Panc1 (cell line): ENCODE measurements at regions of chr1 and their contacts with region 1.

Region 1: DNA sequence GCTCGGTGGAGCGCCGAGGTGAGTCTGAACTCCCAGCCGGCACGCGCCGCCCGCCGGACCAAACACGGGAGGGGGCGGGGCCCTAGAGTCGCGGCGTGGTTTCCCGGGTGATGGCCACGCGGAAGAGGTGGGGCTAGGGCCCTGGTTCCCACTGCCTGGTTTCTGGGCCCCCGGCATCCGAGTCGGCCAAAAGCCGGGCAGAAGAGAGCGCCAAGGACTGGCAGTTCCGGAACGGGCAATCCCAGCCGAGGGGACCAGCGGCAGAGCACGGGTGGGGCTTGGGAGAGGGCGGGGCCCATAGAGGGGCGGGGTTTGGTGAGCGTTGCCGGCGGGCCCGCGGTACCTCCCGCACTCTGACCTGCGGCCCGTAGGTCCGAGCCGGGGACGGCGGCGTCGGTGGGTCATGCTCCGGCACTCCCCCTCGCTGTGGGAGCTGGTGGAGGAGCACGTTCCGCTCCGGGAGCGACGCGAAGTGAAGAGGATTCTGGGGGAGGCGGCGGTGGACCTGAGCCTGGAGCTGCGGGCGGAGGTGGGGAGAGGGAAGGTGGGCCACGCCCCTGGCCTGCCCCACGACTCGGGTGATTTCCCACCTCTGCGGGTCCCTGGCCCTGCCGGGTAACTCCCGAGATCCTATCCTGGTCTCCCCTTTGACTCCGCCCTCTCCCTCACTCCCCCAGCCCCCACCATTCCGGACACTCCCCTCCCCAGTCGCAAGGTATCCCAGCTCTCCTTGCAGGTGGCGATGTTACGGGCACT is at the start of gene CCDC24:
- DNase-seq: no peak
- ATAC-seq: peak; percentile 85
- H3K4me3 ChIP-seq: peak within 1 kb of the TSS; percentile 60 to 82
- H3K27ac ChIP-seq: peak within 1 kb of the TSS; percentile 92
- H3K4me1 ChIP-seq: peaks cover 16% of the 10 kb centered on the region
- H3K27me3 ChIP-seq: no peaks in the 10 kb centered on the region
- CTCF ChIP-seq: no peak
- total RNA-seq, gene CCDC24: 24.4 TPM

Region 2: GRCh38 chr1:44016890-44017400 is 25.3 kb after region 1 on chr1:
- CTCF ChIA-PET with region 1: interaction called, 15 read pairs
- POLR2A ChIA-PET with region 1: interaction called, 5 read pairs
- in situ Hi-C with region 1: no loop called
- intact Hi-C with region 1: no loop called
- DNase-seq: no peak
- ATAC-seq: no peak
- H3K4me3 ChIP-seq: no peak overlapping the region
- H3K27ac ChIP-seq: no peak overlapping the region
- H3K4me1 ChIP-seq: no peaks in the 10 kb centered on the region
- H3K27me3 ChIP-seq: no peaks in the 10 kb centered on the region
- CTCF ChIP-seq: no peak

Region 3: GRCh38 chr1:44036409-44037139 is 44.9 kb after region 1 on chr1:
- CTCF ChIA-PET with region 1: no interaction called
- POLR2A ChIA-PET with region 1: interaction called, 6 read pairs
- in situ Hi-C with region 1: no loop called
- intact Hi-C with region 1: loop called (anchors 5 kb)
- DNase-seq: no peak
- ATAC-seq: peak; percentile 87
- H3K4me3 ChIP-seq: no peak overlapping the region
- H3K27ac ChIP-seq: no peak overlapping the region
- H3K4me1 ChIP-seq: peaks cover 3% of the 10 kb centered on the region; the same call in 1 of the 2 replicates
- H3K27me3 ChIP-seq: no peaks in the 10 kb centered on the region
- CTCF ChIP-seq: peak; percentile 92